ENCODE measurements at regions of chr22 and their contacts with region 1.

Region 1: GRCh38 chr22:41621099-41621910 is at the start of gene XRCC6:
- DNase-seq: peak; percentile 100
- H3K4me3 Mint-ChIP-seq: peak within 1 kb of the TSS; percentile 98
- H3K27ac Mint-ChIP-seq: peak within 1 kb of the TSS; percentile 98
- H3K4me1 Mint-ChIP-seq: peaks cover 56% of the 10 kb centered on the region
- H3K27me3 Mint-ChIP-seq: no peaks in the 10 kb centered on the region
- total RNA-seq, gene XRCC6: 424 to 436 TPM

Region 2: GRCh38 chr22:41204992-41205900 is 416.1 kb before region 1 on chr22 and contains the start of gene L3MBTL2:
- CTCF ChIA-PET with region 1: no interaction called
- intact Hi-C with region 1: loop called (anchors 1 kb)
- DNase-seq: peak; percentile 99
- H3K4me3 Mint-ChIP-seq: peak within 1 kb of the TSS; percentile 88
- H3K27ac Mint-ChIP-seq: peak within 1 kb of the TSS; percentile 86
- H3K4me1 Mint-ChIP-seq: peaks cover 33% of the 10 kb centered on the region
- H3K27me3 Mint-ChIP-seq: no peaks in the 10 kb centered on the region
- total RNA-seq, gene L3MBTL2: 19.4 to 22.3 TPM

Region 3: DNA sequence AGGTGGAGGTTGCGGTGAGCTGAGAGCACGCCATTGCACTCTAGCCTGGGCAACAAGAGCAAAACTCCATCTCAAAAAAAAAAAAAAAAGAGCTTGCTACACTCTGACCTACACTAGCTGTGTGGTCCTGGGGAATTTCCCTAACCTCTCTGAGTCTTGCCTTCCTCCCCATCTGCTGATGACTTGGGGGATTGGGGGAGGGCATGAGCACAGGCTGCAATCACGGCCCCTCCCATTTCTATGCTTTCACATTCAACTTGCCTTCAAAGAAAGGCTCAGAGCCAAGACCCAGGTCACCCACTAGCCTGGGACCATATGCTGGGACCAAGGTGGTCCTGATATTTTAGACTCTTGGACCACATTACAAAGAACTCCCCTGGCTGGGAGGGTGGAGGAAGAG is 279.3 kb before region 1 on chr22:
- CTCF ChIA-PET with region 1: no interaction called
- intact Hi-C with region 1: no loop called
- DNase-seq: peak; percentile 37
- H3K4me3 Mint-ChIP-seq: no peak overlapping the region
- H3K27ac Mint-ChIP-seq: no peak overlapping the region
- H3K4me1 Mint-ChIP-seq: peaks cover 1% of the 10 kb centered on the region
- H3K27me3 Mint-ChIP-seq: no peaks in the 10 kb centered on the region

Region 4: GRCh38 chr22:41381329-41382097 is 239.8 kb before region 1 on chr22 and contains the start of gene TEF:
- CTCF ChIA-PET with region 1: no interaction called
- intact Hi-C with region 1: loop called (anchors 1 kb)
- DNase-seq: peak; percentile 98
- H3K4me3 Mint-ChIP-seq: peak within 1 kb of the TSS; percentile 87
- H3K27ac Mint-ChIP-seq: peak within 1 kb of the TSS; percentile 95
- H3K4me1 Mint-ChIP-seq: peaks cover 13% of the 10 kb centered on the region
- H3K27me3 Mint-ChIP-seq: no peaks in the 10 kb centered on the region
- total RNA-seq, gene TEF: 1.7 to 1.9 TPM

Region 5: DNA sequence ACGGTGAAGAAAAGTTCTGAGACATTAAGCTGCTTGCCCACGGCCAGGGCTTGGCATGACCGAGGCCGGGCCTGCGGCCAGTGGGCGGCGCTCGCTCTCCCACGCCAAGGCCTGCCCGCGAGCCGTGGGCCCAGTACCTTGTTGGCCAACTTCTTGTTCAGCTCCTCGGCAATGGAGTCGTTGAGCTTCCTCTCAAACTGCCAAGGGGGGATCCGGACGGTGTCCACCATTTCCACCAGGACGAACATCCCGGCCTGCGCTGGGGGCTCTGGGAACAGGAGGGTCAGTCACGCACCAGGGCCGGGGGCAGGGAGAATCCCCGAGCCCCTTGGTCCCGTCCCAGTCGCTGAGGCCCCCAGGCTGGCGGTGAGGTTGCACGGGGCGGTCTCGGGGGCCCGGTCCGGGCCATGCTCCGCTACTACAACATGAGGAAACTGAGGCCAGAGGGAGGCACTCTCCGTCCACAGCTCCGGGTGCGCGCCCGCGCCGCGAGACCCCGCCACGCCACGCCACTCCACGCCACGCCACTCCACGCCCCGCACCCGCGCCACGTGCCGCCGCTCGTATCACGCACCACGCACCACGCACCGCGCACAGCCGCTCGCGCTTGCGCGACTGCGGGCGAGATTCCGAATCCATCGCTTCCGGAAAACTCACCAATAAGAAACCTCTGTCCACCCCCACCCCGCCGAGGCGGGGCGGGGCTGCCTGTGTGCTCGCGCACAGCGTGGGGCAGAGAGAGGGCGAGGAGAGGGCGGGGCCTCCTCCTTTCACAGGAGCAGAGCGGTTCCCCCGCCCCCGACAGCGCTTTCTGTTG is 77.2 kb before region 1 on chr22 and contains the start of gene POLR3H:
- CTCF ChIA-PET with region 1: no interaction called
- intact Hi-C with region 1: loop called (anchors 1 kb)
- DNase-seq: peak; percentile 97
- H3K4me3 Mint-ChIP-seq: peak within 1 kb of the TSS; percentile 94
- H3K27ac Mint-ChIP-seq: peak within 1 kb of the TSS; percentile 87
- H3K4me1 Mint-ChIP-seq: peaks cover 43% of the 10 kb centered on the region
- H3K27me3 Mint-ChIP-seq: no peaks in the 10 kb centered on the region
- total RNA-seq, gene POLR3H: 14.8 to 17.6 TPM

Region 6: GRCh38 chr22:41603873-41604332 is 17.4 kb before region 1 on chr22:
- CTCF ChIA-PET with region 1: interaction called, 9 read pairs
- intact Hi-C with region 1: loop called (anchors 1 kb)
- DNase-seq: peak; percentile 78
- H3K4me3 Mint-ChIP-seq: no peak overlapping the region
- H3K27ac Mint-ChIP-seq: no peak overlapping the region
- H3K4me1 Mint-ChIP-seq: peaks cover 24% of the 10 kb centered on the region
- H3K27me3 Mint-ChIP-seq: no peaks in the 10 kb centered on the region

Region 7: GRCh38 chr22:41650229-41650628 is 28.9 kb after region 1 on chr22:
- CTCF ChIA-PET with region 1: no interaction called
- intact Hi-C with region 1: no loop called
- DNase-seq: no peak
- H3K4me3 Mint-ChIP-seq: no peak overlapping the region
- H3K27ac Mint-ChIP-seq: no peak overlapping the region
- H3K4me1 Mint-ChIP-seq: peaks cover 14% of the 10 kb centered on the region
- H3K27me3 Mint-ChIP-seq: no peaks in the 10 kb centered on the region

Region 8: GRCh38 chr22:41688365-41689211 is 67.3 kb after region 1 on chr22 and contains the start of gene SNU13:
- CTCF ChIA-PET with region 1: interaction called, 4 read pairs
- intact Hi-C with region 1: loop called (anchors 1 kb)
- DNase-seq: peak; percentile 96
- H3K4me3 Mint-ChIP-seq: peak within 1 kb of the TSS; percentile 97
- H3K27ac Mint-ChIP-seq: peak within 1 kb of the TSS; percentile 97
- H3K4me1 Mint-ChIP-seq: peaks cover 39% of the 10 kb centered on the region
- H3K27me3 Mint-ChIP-seq: no peaks in the 10 kb centered on the region
- total RNA-seq, gene SNU13: 265 to 277 TPM

Measured in activated naive CD4-positive, alpha-beta T cell treated with anti-CD3 and anti-CD28 coated beads for 36 hours (primary cell).